Activated CD4-positive, alpha-beta T cell treated with anti-CD3 and anti-CD28 coated beads, Interleukin-2, amount 10 ng/mL, durations not matched to agents 24 days and 14 days (primary cell): ENCODE measurements at regions of chr1 and their contacts with region 1.

Region 1: GRCh38 chr1:10032590-10033358 is at the start of gene UBE4B:
- DNase-seq: peak; percentile 100
- H3K4me3 Mint-ChIP-seq: peak within 1 kb of the TSS; percentile 85
- H3K27ac Mint-ChIP-seq: peak within 1 kb of the TSS; percentile 97
- H3K4me1 Mint-ChIP-seq: peaks cover 20% of the 10 kb centered on the region
- H3K27me3 Mint-ChIP-seq: no peaks in the 10 kb centered on the region
- total RNA-seq, gene UBE4B: 29.9 and 31.1 TPM in 2 replicates

Region 2: DNA sequence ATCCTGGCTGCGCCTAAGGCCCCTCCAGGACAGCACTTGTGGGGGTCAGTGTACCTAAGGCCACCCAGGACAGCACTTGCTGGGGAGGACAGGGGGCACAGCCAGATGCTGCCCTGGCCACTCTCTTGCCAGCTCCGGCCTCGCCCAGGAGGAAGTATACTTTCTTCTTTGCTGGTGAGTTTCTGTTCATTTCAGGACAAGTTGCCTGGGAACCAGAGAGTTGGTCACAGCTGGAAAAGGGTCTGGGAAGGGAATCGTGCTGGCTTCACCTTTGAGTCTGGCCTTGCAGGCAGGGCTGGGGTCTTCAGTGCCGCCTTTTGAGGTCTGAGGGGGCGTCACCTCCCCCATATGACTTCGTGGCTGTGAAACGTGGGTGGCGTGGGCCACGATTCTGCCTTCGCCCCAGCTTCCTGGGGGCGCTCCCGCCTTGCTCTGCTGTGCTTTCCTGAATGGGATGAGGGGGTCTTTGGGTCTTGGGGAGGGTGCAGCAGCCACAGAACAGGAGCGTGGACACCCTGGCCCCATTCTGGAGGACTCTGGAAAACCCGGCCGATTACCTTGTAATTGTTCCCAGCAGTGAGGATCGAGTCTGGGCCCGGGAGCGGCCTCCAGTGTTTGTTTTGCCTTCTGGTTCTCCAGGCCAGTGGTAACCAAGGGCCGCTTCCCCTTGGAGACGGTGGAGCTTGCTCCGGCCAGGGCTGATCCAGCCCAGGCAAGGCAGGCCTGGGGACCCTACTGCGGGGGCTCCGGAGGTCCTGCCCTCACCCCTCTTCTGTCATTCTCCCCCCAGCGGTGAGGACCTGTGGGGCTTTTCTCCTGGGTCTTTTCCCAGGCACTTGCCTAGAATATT is 694.2 kb before region 1 on chr1:
- intact Hi-C with region 1: no loop called
- DNase-seq: no peak
- H3K4me3 Mint-ChIP-seq: no peak overlapping the region
- H3K27ac Mint-ChIP-seq: no peak overlapping the region
- H3K4me1 Mint-ChIP-seq: no peaks in the 10 kb centered on the region
- H3K27me3 Mint-ChIP-seq: no peaks in the 10 kb centered on the region

Region 3: DNA sequence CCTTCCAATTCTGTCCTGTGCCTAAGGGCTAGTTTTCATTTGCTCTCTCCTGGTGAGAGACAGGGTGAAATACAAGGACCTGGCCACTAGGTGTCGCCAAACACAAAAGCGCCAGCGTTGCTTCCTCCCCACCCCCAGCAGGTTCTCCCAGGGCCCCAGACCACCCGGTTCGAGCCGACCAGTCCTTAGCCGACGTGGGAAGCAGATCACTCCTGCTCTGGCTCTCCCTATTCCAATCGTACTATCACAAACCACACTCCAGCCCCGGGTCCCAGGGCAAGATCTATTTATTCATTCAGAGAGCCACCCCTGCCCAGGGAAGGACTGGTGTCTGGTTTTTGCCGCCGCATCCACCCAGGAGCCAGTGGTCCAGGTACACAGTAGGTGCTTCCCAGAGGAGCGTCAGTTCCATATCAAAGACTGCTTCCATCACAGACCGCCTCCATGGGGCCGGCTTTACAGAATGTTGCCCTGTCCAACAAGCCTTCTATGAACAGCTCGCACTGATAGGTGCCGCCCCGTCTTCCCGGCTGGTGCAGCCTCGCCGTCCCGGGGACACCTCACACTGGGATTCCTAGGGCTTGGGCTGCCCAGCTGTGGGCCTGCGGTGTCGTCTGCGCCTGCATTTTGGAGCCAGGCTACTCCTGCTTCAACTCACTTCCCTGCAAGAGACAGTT is 157.7 kb before region 1 on chr1:
- intact Hi-C with region 1: loop called (anchors 2 kb)
- DNase-seq: peak; percentile 91
- H3K4me3 Mint-ChIP-seq: no peak overlapping the region
- H3K27ac Mint-ChIP-seq: no peak overlapping the region
- H3K4me1 Mint-ChIP-seq: peaks cover 4% of the 10 kb centered on the region
- H3K27me3 Mint-ChIP-seq: no peaks in the 10 kb centered on the region

Region 4: DNA sequence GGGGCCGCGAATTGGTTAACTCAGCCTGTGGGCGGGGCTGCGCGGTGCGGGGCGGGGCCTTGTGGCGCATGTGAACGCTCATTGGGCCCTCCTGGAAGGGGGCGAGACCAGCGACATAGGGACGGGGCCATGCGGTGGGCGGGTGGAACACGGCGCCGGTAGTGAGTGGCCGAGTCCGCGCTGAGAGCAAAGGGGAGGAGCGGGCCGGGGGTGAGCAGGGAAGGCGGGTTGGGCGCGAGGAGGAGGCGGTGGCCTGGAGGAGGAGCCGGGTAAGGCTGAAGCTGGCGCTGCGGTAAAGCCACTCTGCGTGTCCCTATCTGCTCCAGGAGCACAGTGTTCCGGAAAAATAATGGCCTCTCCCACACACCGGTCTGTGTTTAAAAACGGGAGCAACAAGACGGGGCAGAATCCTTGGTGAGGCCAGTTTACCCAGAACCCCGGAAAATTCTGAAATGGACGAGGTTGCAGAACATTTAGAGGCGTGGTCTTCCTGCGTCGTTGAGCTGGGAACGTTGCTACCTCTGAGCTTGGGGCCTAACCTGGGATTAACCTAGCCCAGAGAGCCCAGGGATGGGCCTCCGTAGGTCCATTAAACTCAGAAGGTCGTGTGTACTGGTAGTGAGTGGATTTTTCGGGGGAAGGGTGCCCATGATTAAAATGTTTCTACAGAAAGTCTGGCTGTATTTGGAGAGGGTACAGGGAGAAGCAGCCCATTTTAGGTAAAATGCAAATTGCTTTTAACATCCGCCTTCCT is 122.2 kb before region 1 on chr1:
- intact Hi-C with region 1: loop called (anchors 1 kb)
- DNase-seq: peak; percentile 100
- H3K4me3 Mint-ChIP-seq: peak overlapping the region; percentile 97
- H3K27ac Mint-ChIP-seq: peak overlapping the region; percentile 98
- H3K4me1 Mint-ChIP-seq: peaks cover 29% of the 10 kb centered on the region
- H3K27me3 Mint-ChIP-seq: peaks cover 4% of the 10 kb centered on the region

Region 5: DNA sequence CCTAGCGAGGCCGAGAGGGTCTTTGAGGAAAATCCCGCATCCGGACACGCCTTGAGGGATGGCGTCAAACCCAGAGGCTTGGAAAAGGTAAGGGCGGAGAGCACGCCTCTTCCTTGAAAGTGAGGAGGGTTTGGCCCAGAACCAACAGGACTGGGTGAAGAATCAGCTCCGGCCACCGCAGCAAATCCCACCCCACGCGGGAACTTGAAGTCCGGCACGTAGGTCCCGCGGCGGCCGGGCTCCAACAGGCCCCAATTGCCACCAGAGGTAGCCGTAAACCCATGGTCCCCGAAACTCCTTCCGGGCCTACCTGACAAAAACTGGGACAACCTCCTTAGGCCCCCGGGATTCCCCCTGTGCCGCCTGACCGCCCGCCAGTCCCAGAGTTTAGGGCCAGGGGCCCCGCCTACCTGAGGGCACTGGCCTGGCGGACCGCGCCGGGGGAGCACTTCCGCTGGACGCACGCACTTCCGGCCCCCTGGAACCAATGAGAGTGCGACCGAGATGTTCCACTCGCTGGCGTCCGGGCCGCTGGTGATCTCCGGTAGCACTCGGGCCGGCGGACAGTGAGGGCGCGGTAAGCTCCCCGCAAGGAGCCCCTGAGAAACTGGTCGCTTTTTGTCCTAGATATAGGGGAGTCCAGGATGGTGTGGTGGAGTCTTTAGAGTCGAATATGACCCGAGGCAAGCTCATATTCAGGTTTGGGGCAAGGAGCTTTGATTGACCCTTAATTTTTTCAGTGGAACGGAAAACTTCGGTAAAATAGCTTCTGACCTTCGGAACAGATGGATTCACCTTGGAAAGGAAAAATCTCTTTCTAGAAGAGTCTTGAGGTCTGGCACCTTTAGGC is 89.6 kb before region 1 on chr1 and contains the starts of genes LZIC and NMNAT1:
- intact Hi-C with region 1: loop called (anchors 1 kb)
- DNase-seq: peak; percentile 98
- H3K4me3 Mint-ChIP-seq: peak within 1 kb of the TSS; percentile 95
- H3K27ac Mint-ChIP-seq: peak within 1 kb of the TSS; percentile 95
- H3K4me1 Mint-ChIP-seq: peaks cover 11% of the 10 kb centered on the region
- H3K27me3 Mint-ChIP-seq: no peaks in the 10 kb centered on the region
- total RNA-seq, gene LZIC: 35.1 and 35.9 TPM in 2 replicates
- total RNA-seq, gene NMNAT1: 5.7 and 6.0 TPM in 2 replicates

Region 6: GRCh38 chr1:9985001-9985400 is 47.8 kb before region 1 on chr1:
- intact Hi-C with region 1: no loop called
- DNase-seq: no peak
- H3K4me3 Mint-ChIP-seq: no peak overlapping the region
- H3K27ac Mint-ChIP-seq: no peak overlapping the region
- H3K4me1 Mint-ChIP-seq: no peaks in the 10 kb centered on the region
- H3K27me3 Mint-ChIP-seq: no peaks in the 10 kb centered on the region

Region 7: DNA sequence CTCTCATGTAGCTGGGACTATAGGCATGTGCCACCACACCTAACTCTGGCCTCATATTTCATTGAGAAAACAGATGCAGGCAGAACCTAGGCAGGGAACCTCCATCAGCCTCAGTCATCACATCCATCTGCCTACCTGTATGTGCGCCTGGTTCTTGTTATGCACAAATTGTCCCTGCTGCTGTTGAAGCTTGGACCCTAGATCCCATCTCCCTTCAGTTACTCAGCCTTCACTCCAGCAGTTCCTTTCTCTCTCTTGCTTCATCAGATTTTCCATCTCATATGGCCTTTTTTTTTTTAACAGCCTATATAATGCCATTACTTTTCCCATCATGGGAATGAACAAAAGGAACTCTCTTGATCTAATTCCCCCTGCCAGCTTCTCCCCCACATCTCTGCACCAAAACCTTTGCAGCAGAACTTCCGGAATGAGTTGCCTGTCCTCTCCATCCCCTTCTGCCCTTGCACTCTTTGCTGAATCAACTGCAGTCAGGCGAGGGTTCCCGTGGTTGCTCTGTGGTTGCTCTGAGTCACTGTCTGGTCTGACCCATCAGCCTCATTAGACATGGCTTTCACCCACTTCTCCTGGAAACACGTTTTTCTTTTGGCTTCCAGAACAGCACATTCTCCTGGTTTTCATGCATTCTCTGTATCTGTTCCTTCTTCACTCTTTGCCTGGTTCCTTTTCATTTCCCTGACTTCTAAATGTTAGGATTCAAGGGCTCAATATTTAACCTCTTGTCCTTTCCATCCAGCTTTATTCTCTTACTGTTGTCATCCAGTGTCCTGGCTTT is 41.5 kb after region 1 on chr1:
- intact Hi-C with region 1: loop called (anchors 5 kb)
- DNase-seq: peak; percentile 82
- H3K4me3 Mint-ChIP-seq: peak overlapping the region; percentile 16
- H3K27ac Mint-ChIP-seq: peak overlapping the region; percentile 23
- H3K4me1 Mint-ChIP-seq: peaks cover 13% of the 10 kb centered on the region
- H3K27me3 Mint-ChIP-seq: no peaks in the 10 kb centered on the region

Region 8: DNA sequence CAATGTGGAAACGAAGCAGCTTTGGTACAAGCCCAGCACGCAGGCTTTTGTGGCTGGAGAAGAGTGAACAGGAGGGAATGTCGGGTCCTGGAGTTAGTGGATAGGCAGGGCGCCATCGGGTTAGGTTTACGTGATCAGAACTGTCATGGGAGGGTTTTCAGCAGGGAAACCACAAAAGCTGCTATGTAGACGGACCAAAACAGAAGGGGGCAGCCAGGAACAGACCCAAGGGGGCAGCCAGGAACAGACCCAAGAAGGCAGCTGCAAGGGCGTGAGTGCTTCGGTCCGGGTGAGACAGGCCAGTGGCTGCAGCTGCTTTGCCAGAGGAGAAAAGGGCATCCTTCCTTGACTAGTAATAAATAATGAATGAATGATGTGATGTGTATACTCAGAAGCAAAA is 100.1 kb after region 1 on chr1:
- intact Hi-C with region 1: no loop called
- DNase-seq: no peak
- H3K4me3 Mint-ChIP-seq: no peak overlapping the region
- H3K27ac Mint-ChIP-seq: no peak overlapping the region
- H3K4me1 Mint-ChIP-seq: no peaks in the 10 kb centered on the region
- H3K27me3 Mint-ChIP-seq: no peaks in the 10 kb centered on the region

Region 9: GRCh38 chr1:10635085-10635896 is 602.5 kb after region 1 on chr1:
- intact Hi-C with region 1: no loop called
- DNase-seq: no peak
- H3K4me3 Mint-ChIP-seq: no peak overlapping the region
- H3K27ac Mint-ChIP-seq: no peak overlapping the region
- H3K4me1 Mint-ChIP-seq: no peaks in the 10 kb centered on the region
- H3K27me3 Mint-ChIP-seq: peaks cover 8% of the 10 kb centered on the region